ENCODE measurements at regions of chr19 and their contacts with region 1.

Region 1: DNA sequence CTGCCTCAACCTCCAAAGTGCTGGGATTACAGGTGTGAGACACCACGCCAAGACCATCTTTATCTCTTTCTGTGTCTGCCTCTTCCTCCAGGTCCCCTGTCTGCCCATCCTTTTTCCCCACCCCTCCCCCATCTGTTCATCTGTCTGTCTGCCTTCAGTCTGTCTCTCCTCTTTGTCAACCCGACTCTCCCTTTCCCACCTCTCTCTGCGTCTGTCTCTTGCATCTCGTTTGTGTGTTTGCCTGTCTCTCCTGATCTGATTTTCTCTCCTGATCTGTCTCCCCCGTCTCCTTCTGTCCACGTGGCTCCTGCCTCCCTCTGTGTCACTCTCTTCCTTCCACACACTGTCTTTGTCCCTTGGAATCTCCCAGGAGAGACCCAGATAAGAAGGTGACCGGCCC is 10.0 kb downstream of the VASP start:
- DNase-seq: no peak
- H3K4me3 ChIP-seq: no peak overlapping the region
- H3K27ac ChIP-seq: no peak overlapping the region
- H3K27me3 ChIP-seq: no peaks in the 10 kb centered on the region
- CTCF ChIP-seq: no peak

Region 2: DNA sequence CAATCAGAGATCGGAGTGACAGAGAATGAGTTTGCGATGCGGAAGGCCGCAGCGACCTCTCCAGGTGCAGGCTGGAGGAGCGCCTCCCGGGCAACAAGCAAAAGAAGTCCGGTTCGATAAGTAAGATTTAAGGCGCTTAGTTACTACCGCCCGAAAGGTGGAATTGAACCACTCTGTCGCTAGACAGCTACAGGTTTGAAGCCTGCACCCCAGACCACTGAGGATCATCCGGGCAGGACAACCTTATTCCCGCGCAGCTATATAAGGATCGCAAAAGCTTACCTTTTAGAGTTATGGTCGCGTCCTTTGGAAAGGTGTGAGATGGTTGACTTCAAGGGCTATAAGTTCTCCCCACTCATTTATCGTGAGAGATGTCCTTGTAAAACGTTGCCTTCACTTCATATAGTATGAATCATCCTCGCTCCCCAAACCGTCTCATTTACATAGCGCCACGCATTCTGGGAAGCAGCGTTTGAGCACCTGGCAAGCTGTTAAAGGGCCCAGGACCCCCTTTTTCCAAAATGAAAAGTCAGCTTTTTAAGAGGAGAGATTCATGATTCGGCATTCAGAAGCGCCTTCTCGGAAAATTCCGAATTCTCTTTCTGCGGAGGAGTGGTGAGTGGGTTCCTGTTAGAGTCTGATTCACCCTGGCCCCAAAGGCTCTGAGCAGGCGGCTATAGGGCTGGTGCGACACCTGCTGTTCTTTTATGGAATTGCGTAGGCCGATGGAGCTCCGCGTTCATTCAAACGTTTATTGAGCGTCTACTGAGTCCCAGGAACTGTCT is 38.6 kb before region 1 on chr19:
- CTCF ChIA-PET with region 1: no interaction called
- POLR2A ChIA-PET with region 1: no interaction called
- DNase-seq: peak; percentile 86
- H3K4me3 ChIP-seq: peak overlapping the region; percentile 65
- H3K27ac ChIP-seq: peak overlapping the region; percentile 96
- H3K27me3 ChIP-seq: no peaks in the 10 kb centered on the region
- CTCF ChIP-seq: peak; percentile 95

Region 3: DNA sequence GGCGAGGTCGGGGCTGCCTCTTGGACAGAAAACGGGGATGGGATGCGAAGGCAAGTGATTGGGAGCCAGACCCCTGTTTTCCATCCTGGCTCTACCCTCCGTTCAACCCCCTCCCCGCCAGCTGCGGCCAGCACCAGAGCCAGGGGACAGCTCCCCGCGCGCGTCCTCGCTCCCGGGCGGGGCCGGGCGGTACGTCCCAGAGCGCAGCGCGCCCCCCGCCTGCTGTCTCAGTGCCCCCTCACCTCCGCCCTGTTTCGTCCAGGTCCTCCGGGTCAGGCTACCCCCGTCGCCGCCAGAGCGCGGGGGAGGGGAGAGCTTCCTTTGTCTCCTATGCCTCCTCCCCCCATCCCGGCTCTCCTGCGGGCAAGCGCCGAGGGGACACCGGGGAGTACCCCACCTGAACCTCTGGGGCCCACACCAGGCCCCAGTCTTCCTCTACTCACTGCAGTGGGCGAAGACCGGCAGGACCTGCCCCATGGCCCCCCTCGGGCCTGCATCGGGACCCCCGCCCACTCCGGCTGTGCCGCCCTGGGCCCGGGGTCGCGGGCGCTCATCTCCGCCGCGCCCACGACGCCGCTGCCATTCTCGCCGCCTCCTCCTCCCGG is 20.8 kb before region 1 on chr19:
- CTCF ChIA-PET with region 1: no interaction called
- POLR2A ChIA-PET with region 1: no interaction called
- DNase-seq: no peak
- H3K4me3 ChIP-seq: peak overlapping the region; percentile 74
- H3K27ac ChIP-seq: no peak overlapping the region
- H3K27me3 ChIP-seq: peaks cover 4% of the 10 kb centered on the region
- CTCF ChIP-seq: no peak

Region 4: DNA sequence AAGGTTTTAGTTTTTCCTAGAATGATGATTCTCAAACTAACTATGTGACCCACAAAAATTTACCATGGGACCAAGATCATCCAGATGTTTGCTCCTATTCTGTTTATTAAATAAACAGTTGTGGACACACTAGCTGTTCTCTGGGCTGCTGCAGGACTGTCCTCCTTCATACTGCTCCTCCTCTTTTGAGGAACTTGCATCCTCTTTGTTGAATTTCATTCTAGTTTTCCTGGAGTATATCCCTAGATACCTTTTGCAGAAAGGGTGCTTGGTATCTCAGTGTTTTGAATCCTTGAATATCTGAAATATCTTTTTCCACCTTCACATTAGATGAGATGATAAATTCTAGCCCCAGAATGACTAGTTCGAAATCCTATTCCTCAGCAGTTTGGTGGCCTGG is 14.1 kb after region 1 on chr19:
- CTCF ChIA-PET with region 1: interaction called, 4 read pairs
- POLR2A ChIA-PET with region 1: interaction called, 10 read pairs
- DNase-seq: no peak
- H3K4me3 ChIP-seq: no peak overlapping the region
- H3K27ac ChIP-seq: no peak overlapping the region
- H3K27me3 ChIP-seq: no peaks in the 10 kb centered on the region
- CTCF ChIP-seq: no peak

Region 5: DNA sequence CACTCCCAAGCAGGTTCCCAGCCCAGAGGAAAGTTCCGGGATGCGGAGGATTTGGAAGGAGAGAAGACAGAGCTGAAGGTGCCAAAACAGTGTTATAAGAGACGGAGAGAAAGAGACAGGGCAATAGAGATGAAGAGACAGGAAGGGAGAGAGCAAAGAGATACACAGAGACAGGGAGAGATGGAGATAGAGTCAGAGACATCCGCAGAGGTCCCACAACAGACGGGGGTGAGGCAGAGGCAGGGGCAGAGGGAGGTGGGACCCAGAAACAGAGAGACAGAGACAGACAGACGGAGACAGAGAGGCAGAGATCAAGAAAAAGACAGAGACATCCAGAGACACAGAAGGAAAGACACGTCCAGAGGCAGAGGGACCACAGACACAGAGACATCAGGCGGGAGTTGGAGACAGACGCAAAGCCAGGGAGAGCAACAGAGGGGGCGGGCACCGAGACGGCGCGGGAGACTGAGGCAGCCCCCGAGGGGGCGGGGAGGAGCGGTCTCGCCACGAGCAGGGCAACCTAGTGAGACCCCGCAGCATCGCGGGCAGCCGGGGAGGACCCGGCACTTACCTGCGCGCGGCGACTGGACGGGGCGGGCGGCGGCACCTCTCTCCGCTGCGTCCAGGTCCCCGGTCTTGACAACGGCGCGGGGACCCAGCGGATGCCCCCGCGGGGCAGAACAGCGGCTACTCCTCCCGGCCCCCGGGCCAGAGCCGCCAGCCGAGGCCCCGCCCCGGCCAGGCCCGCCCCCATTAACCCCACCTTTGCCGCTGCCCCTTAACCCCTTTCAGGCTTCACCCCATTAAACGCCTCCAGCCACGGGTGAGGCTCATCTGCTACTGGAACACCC is 84.5 kb after region 1 on chr19 and contains the start of gene GPR4:
- CTCF ChIA-PET with region 1: no interaction called
- POLR2A ChIA-PET with region 1: no interaction called
- DNase-seq: no peak
- H3K4me3 ChIP-seq: no peak within 1 kb of the TSS
- H3K27ac ChIP-seq: no peak within 1 kb of the TSS
- H3K27me3 ChIP-seq: peaks cover 44% of the 10 kb centered on the region
- CTCF ChIP-seq: no peak
- polyA plus RNA-seq, gene GPR4: not detected in 2 replicates

Measured in AG04450 (cell line).